GM10248 (cell line): ENCODE measurements at regions of chr13 and their contacts with region 1.

Region 1: GRCh38 chr13:102609696-102610095 is 12.9 kb downstream of the TPP2 start:
- DNase-seq: no peak
- CTCF ChIP-seq: no peak

Region 2: DNA sequence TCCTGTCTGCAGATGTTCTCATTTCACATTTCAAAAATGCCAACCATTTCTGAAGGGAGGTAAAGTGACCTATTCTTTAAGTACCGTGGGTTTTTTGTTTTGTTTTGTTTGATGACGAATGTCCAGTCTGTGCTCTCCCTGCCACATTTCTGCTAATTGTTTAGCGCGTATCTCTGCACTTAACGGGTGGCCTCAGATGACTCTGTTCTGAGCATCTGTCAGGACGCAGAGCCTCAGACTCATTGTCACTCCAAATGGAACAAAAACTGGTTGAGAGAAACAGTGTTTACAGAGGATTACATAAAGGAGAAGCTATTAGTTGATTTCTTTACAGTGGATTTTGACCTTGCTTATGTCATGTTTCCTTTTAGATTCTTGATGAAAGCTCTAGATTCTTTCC is 10.8 kb after region 1 on chr13:
- CTCF ChIA-PET with region 1: interaction called, 10 read pairs
- POLR2A ChIA-PET with region 1: no interaction called
- DNase-seq: no peak
- CTCF ChIP-seq: no peak